ENCODE measurements at regions of chr1 and their contacts with region 1.

Region 1: GRCh38 chr1:153510984-153511410 is 24.8 kb downstream of the S100A6 start:
- DNase-seq: peak; percentile 86
- H3K4me3 Mint-ChIP-seq: no peak overlapping the region
- H3K27ac Mint-ChIP-seq: no peak overlapping the region
- H3K4me1 Mint-ChIP-seq: peaks cover 21% of the 10 kb centered on the region
- H3K27me3 Mint-ChIP-seq: peaks cover 11% of the 10 kb centered on the region

Region 2: DNA sequence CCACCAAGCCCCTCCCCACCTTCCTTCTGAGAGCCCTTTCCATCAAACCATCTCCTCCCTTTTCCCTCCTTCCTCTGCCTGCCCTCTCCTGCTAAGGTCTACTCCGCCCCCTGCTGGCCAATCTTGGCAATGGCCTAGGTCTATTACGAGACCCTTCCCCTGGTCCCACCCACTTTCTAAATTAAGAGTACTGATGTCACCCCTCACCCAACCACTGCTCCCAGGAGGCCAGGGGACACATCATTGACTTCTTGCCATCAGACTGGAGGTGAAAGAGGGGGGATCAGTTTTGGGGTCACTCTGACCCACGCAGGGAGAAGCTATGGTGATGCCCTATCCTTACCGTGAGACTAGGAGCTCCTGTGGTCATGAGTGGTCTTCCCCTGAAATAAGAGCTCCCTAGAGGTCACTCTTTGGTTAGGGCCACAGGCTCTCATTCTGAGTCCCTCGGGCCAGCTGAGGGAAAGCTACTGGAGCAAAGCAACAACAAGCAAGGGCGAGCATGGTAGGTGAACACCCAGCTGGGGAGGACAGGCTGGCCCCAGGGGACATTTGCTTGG is 15.9 kb before region 1 on chr1:
- CTCF ChIA-PET with region 1: interaction called, 12 read pairs
- DNase-seq: peak; percentile 84
- H3K4me3 Mint-ChIP-seq: no peak overlapping the region
- H3K27ac Mint-ChIP-seq: no peak overlapping the region
- H3K4me1 Mint-ChIP-seq: no peaks in the 10 kb centered on the region
- H3K27me3 Mint-ChIP-seq: peaks cover 64% of the 10 kb centered on the region

Region 3: GRCh38 chr1:153532769-153533599 is 22.0 kb after region 1 on chr1:
- CTCF ChIA-PET with region 1: interaction called, 36 read pairs
- DNase-seq: peak; percentile 87
- H3K4me3 Mint-ChIP-seq: peak overlapping the region; percentile 82
- H3K27ac Mint-ChIP-seq: peak overlapping the region; percentile 91
- H3K4me1 Mint-ChIP-seq: peaks cover 62% of the 10 kb centered on the region
- H3K27me3 Mint-ChIP-seq: no peaks in the 10 kb centered on the region

Region 4: DNA sequence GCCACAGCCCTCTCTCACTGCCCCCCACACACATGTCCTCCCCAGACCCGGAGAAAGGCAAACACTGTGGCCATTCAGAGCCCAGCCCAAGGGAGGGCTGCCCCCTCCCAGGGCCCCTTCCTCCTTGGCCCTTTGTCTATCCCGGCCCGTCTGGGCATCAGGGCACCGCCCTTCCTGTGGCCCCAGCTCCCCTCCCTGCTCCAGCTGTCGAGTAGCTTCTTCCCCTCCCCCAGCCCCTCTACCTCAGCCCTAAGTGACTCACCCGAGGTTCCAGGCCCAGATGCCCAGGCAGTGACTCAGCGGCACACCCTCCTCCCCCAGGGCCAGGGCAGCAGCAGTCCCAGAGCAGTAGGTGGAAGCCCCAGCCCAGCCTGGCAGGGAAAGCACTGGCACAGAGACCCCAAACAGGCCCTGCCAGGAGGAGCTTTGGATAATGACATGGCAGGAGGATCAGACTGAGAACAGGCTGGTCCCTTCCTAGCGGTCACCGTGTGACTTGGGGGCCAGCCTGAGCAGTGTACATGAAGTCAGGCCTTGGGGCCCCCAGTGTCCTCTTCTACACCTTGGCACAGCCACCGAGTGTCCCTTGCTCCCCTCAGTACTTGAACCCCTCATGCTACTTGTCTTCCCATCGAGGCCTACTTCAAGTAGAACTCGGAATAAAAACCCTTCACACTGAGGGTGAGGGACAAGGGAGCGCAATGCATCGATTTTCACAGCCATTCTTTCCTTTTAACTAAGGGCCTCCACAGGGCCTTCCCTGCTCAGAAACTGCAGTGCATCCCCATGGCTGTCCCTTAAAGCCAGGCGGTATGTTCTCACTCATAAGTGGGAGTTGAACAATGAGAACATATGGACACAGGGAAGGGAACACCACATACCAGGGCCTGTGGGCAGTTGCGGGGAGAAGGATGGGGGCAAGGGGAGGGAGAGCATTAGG is 55.7 kb after region 1 on chr1:
- CTCF ChIA-PET with region 1: interaction called, 116 read pairs
- DNase-seq: peak; percentile 87
- H3K4me3 Mint-ChIP-seq: peak overlapping the region; percentile 42
- H3K27ac Mint-ChIP-seq: peak overlapping the region; percentile 96
- H3K4me1 Mint-ChIP-seq: peaks cover 41% of the 10 kb centered on the region
- H3K27me3 Mint-ChIP-seq: peaks cover 15% of the 10 kb centered on the region

Region 5: GRCh38 chr1:153577624-153578051 is 66.6 kb after region 1 on chr1:
- CTCF ChIA-PET with region 1: interaction called, 116 read pairs
- DNase-seq: no peak
- H3K4me3 Mint-ChIP-seq: no peak overlapping the region
- H3K27ac Mint-ChIP-seq: no peak overlapping the region
- H3K4me1 Mint-ChIP-seq: peaks cover 14% of the 10 kb centered on the region
- H3K27me3 Mint-ChIP-seq: peaks cover 40% of the 10 kb centered on the region

Measured in activated naive CD4-positive, alpha-beta T cell treated with anti-CD3 and anti-CD28 coated beads, Interleukin-2, amount 10 ng/mL, durations not matched to agents 7 days and 5 days (primary cell).